ENCODE measurements at regions of chr14 and their contacts with region 1.

Region 1: DNA sequence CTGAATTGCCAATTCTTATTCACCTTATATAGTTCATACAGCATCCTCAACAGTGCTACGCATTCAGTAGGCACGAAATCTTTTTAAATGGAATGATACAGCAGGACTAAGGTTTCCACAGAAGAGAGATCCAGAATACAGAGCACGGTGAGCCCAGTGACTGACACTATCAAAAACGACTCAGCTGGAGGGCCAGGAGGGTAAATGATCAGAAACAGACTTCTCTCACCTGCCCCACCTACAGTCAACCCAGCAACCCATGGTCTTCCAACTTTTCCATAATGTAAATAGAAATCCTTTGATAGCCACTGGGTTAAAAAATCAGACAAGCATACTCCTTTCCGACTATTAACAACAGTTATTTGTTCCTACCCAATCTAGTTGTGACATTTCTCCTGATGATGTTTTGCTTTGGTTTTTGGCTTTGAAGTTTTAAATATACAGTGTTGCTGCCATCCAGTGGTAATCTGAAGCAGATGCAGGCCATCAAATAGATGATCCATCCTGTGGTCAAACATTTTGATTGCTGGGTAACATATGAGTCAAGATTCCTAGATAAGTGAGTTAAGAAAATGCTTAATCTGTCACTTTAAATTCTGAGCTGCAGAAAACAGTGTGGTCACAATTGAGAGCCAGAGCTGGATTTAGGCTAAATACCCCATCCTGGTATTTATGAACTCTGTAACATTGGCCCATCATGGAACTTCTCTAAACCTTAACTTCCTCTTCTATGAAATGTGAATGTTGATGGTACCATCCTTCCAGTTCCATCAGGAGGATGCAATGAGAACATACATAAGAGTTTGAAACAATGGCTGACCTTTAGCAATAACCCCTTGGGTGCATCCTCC is 42.0 kb downstream of the GPHB5 start:
- DNase-seq: peak in 2 of 4 donors; percentile 45 to 56
- ATAC-seq: peak; percentile 66
- H3K4me3 ChIP-seq: no peak overlapping the region
- H3K27ac ChIP-seq: no peak overlapping the region
- H3K4me1 ChIP-seq: no peaks in the 10 kb centered on the region
- H3K27me3 ChIP-seq: no peaks in the 10 kb centered on the region
- CTCF ChIP-seq: peak; percentile 72 to 76

Region 2: GRCh38 chr14:62179367-62180018 is 1097.2 kb before region 1 on chr14:
- intact Hi-C with region 1: loop called in 1 of 2 experiments (anchors 10 kb)
- DNase-seq: peak; percentile 29 to 76 (median 46)
- ATAC-seq: peak; percentile 86
- H3K4me3 ChIP-seq: no peak overlapping the region
- H3K27ac ChIP-seq: no peak overlapping the region
- H3K4me1 ChIP-seq: no peaks in the 10 kb centered on the region
- H3K27me3 ChIP-seq: no peaks in the 10 kb centered on the region
- CTCF ChIP-seq: peak; percentile 43 to 45

Region 3: DNA sequence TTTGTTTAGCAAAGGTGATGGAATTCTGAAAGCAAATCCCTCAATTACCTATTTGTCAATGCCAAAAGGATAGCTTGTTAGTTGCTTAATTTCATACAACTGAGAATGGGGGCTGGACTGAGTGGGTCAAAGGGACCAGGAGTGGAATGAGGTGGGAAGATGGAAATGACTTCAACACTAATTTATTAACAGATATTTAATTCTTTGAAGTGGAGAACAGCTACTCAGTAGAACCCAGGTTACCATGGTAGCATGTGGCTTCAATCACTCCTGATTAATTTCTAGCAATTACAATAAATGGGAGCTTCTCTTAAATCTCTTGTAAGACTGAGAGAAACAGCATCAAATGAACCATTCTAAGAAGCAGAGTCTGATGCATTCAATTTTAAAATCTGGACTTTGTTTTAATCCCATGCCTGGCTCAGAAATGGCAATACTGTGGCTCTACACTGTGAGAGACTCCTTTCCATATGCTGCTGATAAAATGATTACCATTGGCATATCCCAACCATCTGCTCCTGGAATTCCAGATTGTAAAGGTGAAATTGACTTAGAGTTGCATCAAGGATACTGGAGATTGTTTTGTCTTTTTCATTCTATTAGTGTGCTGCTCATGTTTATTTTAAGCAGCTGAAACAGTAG is 906.7 kb before region 1 on chr14:
- intact Hi-C with region 1: no loop called
- DNase-seq: no peak
- ATAC-seq: no peak
- H3K4me3 ChIP-seq: no peak overlapping the region
- H3K27ac ChIP-seq: no peak overlapping the region
- H3K4me1 ChIP-seq: no peaks in the 10 kb centered on the region
- H3K27me3 ChIP-seq: no peaks in the 10 kb centered on the region
- CTCF ChIP-seq: no peak

Region 4: GRCh38 chr14:63078578-63078977 is 198.1 kb before region 1 on chr14:
- intact Hi-C with region 1: no loop called
- DNase-seq: no peak
- ATAC-seq: no peak
- H3K4me3 ChIP-seq: no peak overlapping the region
- H3K27ac ChIP-seq: no peak overlapping the region
- H3K4me1 ChIP-seq: no peaks in the 10 kb centered on the region
- H3K27me3 ChIP-seq: no peaks in the 10 kb centered on the region
- CTCF ChIP-seq: no peak

Region 5: DNA sequence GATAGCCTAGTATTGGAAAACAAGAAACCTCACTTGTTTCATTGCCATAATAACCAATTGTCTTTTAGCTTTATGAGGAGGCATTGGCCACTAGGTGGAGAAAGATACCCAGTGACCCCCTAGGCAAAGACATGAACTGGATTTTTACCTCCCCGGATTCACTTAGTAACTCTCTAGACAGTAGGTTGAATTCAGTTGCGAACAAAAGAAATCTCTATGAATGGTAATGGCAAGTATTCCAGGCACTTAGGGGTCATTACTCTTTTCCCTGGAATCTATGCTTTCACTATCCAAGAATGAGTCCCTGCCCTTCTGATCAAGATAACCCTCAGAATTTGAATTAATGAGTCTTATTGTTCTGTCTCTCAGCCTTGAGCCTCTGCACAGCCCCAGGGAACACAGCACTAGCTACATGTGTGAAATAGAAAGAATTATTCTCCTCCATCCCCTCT is 101.9 kb before region 1 on chr14:
- intact Hi-C with region 1: loop called in 1 of 2 experiments (anchors 5 kb)
- DNase-seq: peak in 1 of 4 donors; percentile 53
- ATAC-seq: peak; percentile 53
- H3K4me3 ChIP-seq: no peak overlapping the region
- H3K27ac ChIP-seq: no peak overlapping the region
- H3K4me1 ChIP-seq: no peaks in the 10 kb centered on the region
- H3K27me3 ChIP-seq: no peaks in the 10 kb centered on the region
- CTCF ChIP-seq: peak in 1 of 2 donors; percentile 59

Region 6: GRCh38 chr14:63392236-63392635 is 115.5 kb after region 1 on chr14:
- intact Hi-C with region 1: no loop called
- DNase-seq: no peak
- ATAC-seq: no peak
- H3K4me3 ChIP-seq: no peak overlapping the region
- H3K27ac ChIP-seq: no peak overlapping the region
- H3K4me1 ChIP-seq: no peaks in the 10 kb centered on the region
- H3K27me3 ChIP-seq: no peaks in the 10 kb centered on the region
- CTCF ChIP-seq: no peak

Measured in left lung (tissue), 14 donors.